Activated CD4-positive, alpha-beta T cell treated with anti-CD3 and anti-CD28 coated beads for 36 hours (primary cell): ENCODE measurements at regions of chr3 and their contacts with region 1.

Region 1: GRCh38 chr3:186854954-186855353 is 12.4 kb downstream of the ADIPOQ start:
- DNase-seq: no peak
- ATAC-seq: no peak
- H3K4me3 Mint-ChIP-seq: no peak overlapping the region
- H3K27ac Mint-ChIP-seq: no peak overlapping the region
- H3K4me1 Mint-ChIP-seq: peaks cover 14% of the 10 kb centered on the region
- H3K27me3 Mint-ChIP-seq: no peaks in the 10 kb centered on the region

Region 2: GRCh38 chr3:186871403-186871924 is 16.5 kb after region 1 on chr3:
- CTCF ChIA-PET with region 1: interaction called, 3 read pairs
- POLR2A ChIA-PET with region 1: no interaction called
- intact Hi-C with region 1: loop called in 1 of 2 experiments (anchors 2 kb)
- DNase-seq: no peak
- ATAC-seq: peak; percentile 66
- H3K4me3 Mint-ChIP-seq: no peak overlapping the region
- H3K27ac Mint-ChIP-seq: peak overlapping the region; percentile 64
- H3K4me1 Mint-ChIP-seq: peaks cover 28% of the 10 kb centered on the region
- H3K27me3 Mint-ChIP-seq: no peaks in the 10 kb centered on the region